Body of pancreas (tissue), 4 donors: ENCODE measurements at regions of chr13 and their contacts with region 1.

Region 1: DNA sequence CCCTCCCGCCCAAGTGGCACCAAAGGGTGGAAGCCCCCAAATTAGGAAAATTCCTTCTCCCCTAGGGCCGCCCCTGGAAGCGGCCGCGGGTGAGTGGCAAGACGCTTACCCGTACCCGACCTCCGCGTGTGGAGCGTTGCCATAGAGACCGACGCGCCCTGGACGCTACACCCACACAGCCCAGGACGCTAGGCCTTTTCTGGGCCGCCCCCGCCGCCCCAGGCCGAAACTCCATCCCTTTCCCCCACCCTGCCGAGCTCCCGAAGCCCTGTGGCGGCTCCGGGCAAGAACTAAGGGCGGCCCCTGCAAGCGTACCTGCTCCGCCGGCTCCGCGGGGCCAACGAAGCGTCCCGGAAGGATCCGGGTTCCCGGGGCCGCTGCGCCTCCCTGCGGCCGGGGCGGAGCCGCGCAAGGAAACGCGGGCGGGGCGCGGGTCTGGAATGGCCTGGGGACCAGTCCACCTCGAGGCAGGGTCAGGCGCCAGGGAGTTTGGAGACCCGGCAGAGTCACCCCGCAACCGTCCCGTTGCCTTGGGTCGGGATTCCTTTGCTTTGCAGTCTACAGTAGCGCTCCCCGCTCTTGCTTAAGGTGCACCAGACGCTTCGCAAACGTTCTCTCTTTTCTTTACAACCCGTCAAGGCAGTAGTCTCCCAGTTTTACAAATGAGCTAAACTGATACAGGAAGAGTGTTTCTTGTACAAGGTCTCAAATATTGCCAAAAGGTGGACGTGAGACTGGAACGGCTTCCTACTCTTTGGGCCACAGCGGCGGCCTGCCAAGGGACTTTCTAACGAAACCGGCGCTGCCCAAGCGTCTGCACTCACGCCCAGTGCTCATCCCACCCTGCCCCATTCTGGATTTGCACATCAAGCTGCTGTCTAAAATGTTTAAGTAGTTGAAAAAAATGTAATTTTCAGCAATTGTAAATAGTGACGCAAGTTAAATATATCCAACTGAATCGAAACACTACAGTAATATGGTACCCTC is at the start of gene NEK5:
- DNase-seq: peak; percentile 61 to 78 (median 68)
- ATAC-seq: peak; percentile 85
- H3K4me3 ChIP-seq: peak within 1 kb of the TSS; percentile 25 to 65
- H3K27ac ChIP-seq: peak within 1 kb of the TSS in 3 of 4 donors; percentile 4 to 38 (median 19)
- H3K4me1 ChIP-seq: peaks cover 20% of the 10 kb centered on the region
- H3K27me3 ChIP-seq: no peaks in the 10 kb centered on the region
- CTCF ChIP-seq: peak; percentile 71 to 88 (median 81)
- POLR2A ChIP-seq: no peak
- total RNA-seq, gene NEK5: 0.33 to 0.78 TPM

Region 2: DNA sequence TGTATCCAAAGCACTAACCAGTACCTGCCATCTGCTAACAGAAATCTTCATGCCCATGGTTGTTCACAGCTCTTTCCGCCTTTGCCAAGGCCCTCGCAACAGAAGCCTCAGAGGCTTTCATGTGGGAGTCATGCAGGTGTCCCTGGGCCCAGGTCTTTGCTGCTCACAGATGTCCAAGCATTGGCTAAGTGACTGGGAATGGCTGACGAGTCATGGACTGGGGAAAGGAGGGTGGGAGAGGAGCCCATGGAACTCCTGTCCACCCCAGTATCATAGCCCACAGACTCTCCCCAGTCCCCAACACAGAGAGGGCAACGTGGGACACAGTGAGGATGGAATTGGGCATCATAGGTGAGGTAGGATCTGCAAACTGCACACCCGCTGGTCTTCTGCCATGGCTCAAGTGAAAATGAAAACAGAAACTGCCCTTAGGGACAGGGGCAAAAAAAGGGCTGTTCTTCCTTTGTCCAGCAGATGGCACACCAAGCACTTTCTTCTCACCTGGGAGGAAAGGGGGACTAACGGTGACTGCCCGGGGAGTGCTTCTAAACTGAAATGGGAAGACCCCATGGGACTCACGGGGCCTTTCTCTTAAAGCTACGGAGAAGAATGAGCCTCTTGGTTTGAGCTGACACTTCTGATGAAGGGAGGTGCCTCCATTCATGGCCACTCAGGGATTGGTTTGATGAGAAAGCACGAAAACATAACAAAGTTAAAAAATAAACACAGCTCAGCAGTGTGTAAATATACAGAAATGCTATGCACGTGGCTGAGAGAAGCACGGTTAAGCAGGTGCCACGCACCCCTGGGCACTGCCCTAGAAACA is 314.0 kb before region 1 on chr13:
- intact Hi-C with region 1: loop called (anchors 10 kb)
- DNase-seq: peak; percentile 76 to 83 (median 80)
- ATAC-seq: peak; percentile 91
- H3K4me3 ChIP-seq: no peak overlapping the region
- H3K27ac ChIP-seq: peak overlapping the region; percentile 66 to 80 (median 68)
- H3K4me1 ChIP-seq: peaks cover 15% of the 10 kb centered on the region
- H3K27me3 ChIP-seq: no peaks in the 10 kb centered on the region
- CTCF ChIP-seq: peak; percentile 71 to 89 (median 83)
- POLR2A ChIP-seq: peak in 1 of 3 donors; percentile 42

Region 3: DNA sequence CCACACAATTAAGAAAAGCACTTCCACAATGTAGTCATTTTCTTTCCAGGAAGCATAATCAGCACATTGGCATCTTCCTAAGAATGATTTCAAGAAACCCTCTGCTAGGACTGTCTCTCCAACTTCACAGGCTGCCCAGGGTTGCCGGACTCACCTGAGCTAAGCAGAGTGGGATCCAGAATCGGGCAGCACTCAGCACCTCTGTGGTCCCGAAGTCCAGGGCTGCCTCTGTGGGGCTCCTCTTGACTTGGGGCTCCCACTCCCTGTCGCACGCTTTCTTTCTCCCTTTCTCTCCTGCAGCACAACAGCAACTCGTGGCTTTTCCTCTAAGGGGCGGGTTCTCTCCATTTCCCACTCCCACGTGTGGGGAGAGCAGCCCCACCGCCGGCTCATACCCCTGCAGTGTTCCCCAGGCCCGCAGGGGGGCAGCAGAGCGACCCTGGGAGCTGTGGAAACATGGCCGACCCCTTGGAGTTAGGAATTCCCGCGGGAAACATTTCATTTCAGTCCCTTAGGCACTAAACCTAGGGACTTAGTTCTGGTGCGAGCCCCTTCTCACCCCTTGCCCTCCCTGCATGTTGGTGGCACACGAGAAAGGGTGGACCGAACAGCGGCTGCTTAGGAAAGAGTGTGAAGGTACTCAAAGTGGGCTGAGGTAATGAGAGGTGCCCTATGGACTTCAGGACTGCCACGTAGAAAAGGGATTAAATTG is 284.0 kb before region 1 on chr13 and contains the start of gene TMEM272:
- intact Hi-C with region 1: loop called (anchors 10 kb)
- DNase-seq: peak; percentile 55 to 73 (median 68)
- ATAC-seq: peak; percentile 93
- H3K4me3 ChIP-seq: no peak within 1 kb of the TSS
- H3K27ac ChIP-seq: no peak within 1 kb of the TSS
- H3K4me1 ChIP-seq: peaks cover 10% of the 10 kb centered on the region
- H3K27me3 ChIP-seq: no peaks in the 10 kb centered on the region
- CTCF ChIP-seq: peak; percentile 78 to 95 (median 89)
- POLR2A ChIP-seq: no peak
- total RNA-seq, gene TMEM272: not detected

Region 4: DNA sequence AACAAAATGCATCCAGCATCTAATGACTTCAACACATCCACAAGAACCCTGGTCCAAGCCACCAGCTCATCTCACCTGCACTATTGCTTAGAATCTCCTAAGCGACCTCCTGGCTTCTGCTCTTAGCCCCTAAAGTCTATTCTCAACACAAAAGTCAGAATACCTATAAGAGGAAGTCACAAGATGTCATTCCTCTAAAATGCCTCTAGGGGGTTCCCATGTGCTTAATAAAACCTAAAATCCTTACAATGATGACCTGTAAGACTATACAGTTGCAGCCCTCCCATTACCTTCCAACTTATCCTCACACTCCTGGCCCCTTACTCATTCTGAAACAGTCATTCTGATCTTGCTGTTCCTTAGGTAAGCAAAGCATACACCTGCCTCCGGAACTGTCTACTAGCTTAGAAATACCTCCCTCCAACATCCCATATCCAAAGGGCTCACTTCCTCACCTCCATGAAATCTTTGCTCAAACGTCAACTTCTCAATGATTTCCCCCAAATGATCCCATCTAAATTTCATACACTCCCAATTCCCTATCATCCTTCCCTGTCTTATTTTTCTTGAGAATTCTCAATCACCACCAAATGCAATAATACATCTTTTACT is 127.8 kb before region 1 on chr13:
- intact Hi-C with region 1: loop called (anchors 10 kb)
- DNase-seq: no peak
- ATAC-seq: peak; percentile 47
- H3K4me3 ChIP-seq: no peak overlapping the region
- H3K27ac ChIP-seq: no peak overlapping the region
- H3K4me1 ChIP-seq: peaks cover 33% of the 10 kb centered on the region
- H3K27me3 ChIP-seq: no peaks in the 10 kb centered on the region
- CTCF ChIP-seq: peak in 6 of 7 experiments; percentile 55 to 72 (median 65)
- POLR2A ChIP-seq: no peak